A673 (cell line): ENCODE measurements at regions of chr18 and their contacts with region 1.

Region 1: DNA sequence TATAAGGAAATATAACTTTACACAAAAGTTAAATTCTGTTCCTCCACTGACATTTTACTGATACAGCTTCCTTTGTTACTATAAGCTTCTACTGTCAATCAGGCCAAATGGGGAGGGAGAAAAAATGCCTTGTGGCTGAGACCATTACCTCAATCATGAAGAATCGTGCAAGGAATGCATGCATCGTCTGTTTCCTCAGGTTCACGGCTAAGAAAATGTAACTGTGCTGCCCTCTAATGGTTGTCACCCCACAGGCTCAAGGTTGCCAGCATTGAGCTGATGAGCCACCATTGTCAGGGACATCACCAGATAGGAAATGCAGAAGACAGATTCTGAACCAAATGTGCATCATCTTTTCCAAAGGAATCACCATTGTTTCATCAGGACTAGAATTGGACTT is 426.9 kb downstream of the CDH2 start:
- DNase-seq: peak; percentile 72
- H3K4me3 ChIP-seq: no peak overlapping the region
- H3K27ac ChIP-seq: no peak overlapping the region
- H3K4me1 ChIP-seq: no peaks in the 10 kb centered on the region
- H3K27me3 ChIP-seq: peaks cover 26% of the 10 kb centered on the region
- CTCF ChIP-seq: peak; percentile 71

Region 2: GRCh38 chr18:27049969-27050368 is 700.0 kb before region 1 on chr18:
- CTCF ChIA-PET with region 1: no interaction called
- POLR2A ChIA-PET with region 1: no interaction called
- intact Hi-C with region 1: no loop called
- DNase-seq: no peak
- H3K4me3 ChIP-seq: no peak overlapping the region
- H3K27ac ChIP-seq: no peak overlapping the region
- H3K4me1 ChIP-seq: no peaks in the 10 kb centered on the region
- H3K27me3 ChIP-seq: no peaks in the 10 kb centered on the region
- CTCF ChIP-seq: no peak

Region 3: GRCh38 chr18:27605107-27605834 is 144.7 kb before region 1 on chr18:
- CTCF ChIA-PET with region 1: interaction called, 11 read pairs
- POLR2A ChIA-PET with region 1: no interaction called
- intact Hi-C with region 1: loop called (anchors 2 kb)
- DNase-seq: peak; percentile 81
- H3K4me3 ChIP-seq: no peak overlapping the region
- H3K27ac ChIP-seq: no peak overlapping the region
- H3K4me1 ChIP-seq: no peaks in the 10 kb centered on the region
- H3K27me3 ChIP-seq: peaks cover 2% of the 10 kb centered on the region
- CTCF ChIP-seq: peak; percentile 79

Region 4: GRCh38 chr18:27685807-27686412 is 64.1 kb before region 1 on chr18:
- CTCF ChIA-PET with region 1: interaction called, 16 read pairs
- POLR2A ChIA-PET with region 1: no interaction called
- intact Hi-C with region 1: loop called (anchors 2 kb)
- DNase-seq: peak; percentile 57
- H3K4me3 ChIP-seq: no peak overlapping the region
- H3K27ac ChIP-seq: no peak overlapping the region
- H3K4me1 ChIP-seq: no peaks in the 10 kb centered on the region
- H3K27me3 ChIP-seq: peaks cover 23% of the 10 kb centered on the region
- CTCF ChIP-seq: peak; percentile 76

Region 5: DNA sequence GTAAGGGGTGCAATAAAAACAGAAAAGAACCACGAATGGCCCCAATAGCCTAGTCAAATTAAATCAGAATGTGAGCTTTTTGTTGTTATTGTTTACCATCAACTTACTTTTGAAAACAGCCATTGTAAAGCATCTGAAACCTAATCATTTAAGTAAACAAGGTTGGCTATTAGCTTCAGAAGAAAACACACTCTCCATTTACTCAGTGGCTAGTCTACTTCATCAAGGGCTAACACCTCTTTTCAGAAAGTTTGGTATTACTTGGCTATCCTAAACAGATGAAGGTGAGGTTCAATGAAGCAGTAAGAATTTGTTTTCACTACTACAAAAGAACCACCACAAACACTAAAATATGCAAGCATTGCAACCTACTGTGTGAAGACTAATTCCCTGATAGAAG is 28.9 kb after region 1 on chr18:
- CTCF ChIA-PET with region 1: interaction called, 13 read pairs
- POLR2A ChIA-PET with region 1: no interaction called
- intact Hi-C with region 1: no loop called
- DNase-seq: no peak
- H3K4me3 ChIP-seq: no peak overlapping the region
- H3K27ac ChIP-seq: no peak overlapping the region
- H3K4me1 ChIP-seq: no peaks in the 10 kb centered on the region
- H3K27me3 ChIP-seq: peaks cover 59% of the 10 kb centered on the region
- CTCF ChIP-seq: no peak